ENCODE measurements at regions of chr1 and their contacts with region 1.

Region 1: DNA sequence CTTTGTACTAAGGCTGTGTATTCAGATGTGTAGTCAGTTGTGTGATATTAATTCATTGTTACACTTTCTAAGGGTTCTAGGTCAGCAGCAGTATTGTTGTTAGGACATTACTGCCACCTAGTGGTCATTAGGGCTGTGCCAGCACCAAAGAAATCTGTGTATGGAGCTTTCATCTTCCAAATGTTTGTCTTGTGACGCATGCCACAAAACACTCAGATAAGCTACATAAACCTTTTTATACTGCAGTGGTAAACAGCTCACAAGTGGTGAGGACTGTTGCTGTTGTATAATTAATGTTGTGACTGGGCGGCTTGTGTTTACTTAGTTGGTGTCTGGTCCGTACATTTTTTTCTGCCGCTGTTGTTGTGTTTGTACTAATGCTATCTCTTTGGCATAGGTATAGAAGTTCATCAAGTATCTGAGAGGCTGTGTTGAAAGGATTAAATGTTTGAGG is 51.7 kb downstream of the S1PR1 start:
- DNase-seq: peak; percentile 52 to 64
- H3K4me3 ChIP-seq: no peak overlapping the region
- H3K27ac ChIP-seq: no peak overlapping the region
- H3K4me1 ChIP-seq: no peaks in the 10 kb centered on the region
- H3K27me3 ChIP-seq: no peaks in the 10 kb centered on the region
- CTCF ChIP-seq: peak; percentile 78 to 90 (median 84)
- POLR2A ChIP-seq: peak in 1 of 2 donors; percentile 3

Region 2: DNA sequence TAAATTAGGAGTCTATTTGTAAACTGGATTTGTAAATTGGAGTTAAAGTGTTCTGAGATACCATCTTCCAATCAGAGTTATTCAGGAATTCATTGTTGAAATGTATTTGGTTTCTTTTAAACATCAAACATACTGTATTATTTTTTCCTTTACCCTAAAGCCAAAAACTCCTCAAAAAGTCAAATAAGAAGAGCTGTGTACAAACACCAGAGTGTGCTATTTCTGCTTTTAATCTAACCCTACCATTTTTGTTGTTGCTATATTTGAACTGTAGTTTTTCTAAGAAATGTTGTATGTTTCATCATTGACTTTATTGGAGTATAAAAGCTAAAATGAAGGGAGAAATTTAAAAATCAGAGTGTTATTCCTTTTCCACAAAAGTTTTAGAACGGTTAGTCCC is 356.8 kb before region 1 on chr1:
- intact Hi-C with region 1: loop called (anchors 10 kb)
- DNase-seq: no peak
- H3K4me3 ChIP-seq: no peak overlapping the region
- H3K27ac ChIP-seq: no peak overlapping the region
- H3K4me1 ChIP-seq: no peaks in the 10 kb centered on the region
- H3K27me3 ChIP-seq: no peaks in the 10 kb centered on the region
- CTCF ChIP-seq: no peak
- POLR2A ChIP-seq: no peak

Measured in uterus (tissue), 4 donors.